Activated CD4-positive, alpha-beta T cell treated with anti-CD3 and anti-CD28 coated beads for 36 hours (primary cell): ENCODE measurements at regions of chr1 and their contacts with region 1.

Region 1: DNA sequence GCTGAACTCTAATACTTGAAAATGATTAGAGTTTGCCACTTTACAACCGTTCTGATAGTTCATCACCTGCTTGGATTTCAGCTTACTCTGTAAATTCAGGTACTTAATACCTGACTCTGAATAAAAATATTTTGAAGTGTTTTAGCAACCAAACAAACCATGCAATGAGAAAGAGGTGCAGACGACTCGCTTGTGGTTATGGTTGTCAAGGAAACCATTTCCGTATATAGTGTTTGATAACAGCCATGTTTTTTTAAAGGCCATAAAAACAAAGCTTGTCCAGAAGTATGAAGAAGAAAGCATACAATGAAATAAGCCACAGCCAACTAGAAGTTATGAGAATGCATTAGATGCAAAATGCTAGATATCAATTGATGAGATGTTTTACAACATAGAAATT is 167.2 kb upstream of the HMCN1 start:
- DNase-seq: peak; percentile 41
- ATAC-seq: peak; percentile 57
- H3K4me3 Mint-ChIP-seq: peak overlapping the region; percentile 22
- H3K27ac Mint-ChIP-seq: peak overlapping the region; percentile 79
- H3K4me1 Mint-ChIP-seq: peaks cover 70% of the 10 kb centered on the region
- H3K27me3 Mint-ChIP-seq: no peaks in the 10 kb centered on the region

Region 2: DNA sequence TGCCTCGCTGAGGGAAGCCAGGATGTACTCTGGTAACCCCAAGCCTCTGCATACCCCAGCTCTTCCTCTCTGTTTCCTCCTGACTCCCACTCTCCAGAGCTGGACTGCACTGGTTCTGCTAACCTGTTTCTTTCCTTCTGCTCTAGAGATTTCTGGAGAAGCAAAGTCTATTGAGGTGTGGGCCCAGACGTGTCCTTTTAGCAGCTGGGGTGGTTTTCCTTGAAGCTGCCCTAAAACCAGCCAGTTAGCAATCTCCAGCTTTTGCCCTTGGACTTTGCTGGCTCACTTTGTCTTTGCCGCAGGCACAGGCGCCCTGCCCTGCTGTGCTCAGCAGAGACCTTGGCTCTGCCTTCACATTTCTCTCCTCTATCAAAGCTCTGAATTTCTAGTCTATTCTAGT is 78.2 kb before region 1 on chr1:
- CTCF ChIA-PET with region 1: no interaction called
- POLR2A ChIA-PET with region 1: no interaction called
- intact Hi-C with region 1: no loop called
- DNase-seq: no peak
- ATAC-seq: no peak
- H3K4me3 Mint-ChIP-seq: no peak overlapping the region
- H3K27ac Mint-ChIP-seq: no peak overlapping the region
- H3K4me1 Mint-ChIP-seq: no peaks in the 10 kb centered on the region
- H3K27me3 Mint-ChIP-seq: no peaks in the 10 kb centered on the region

Region 3: DNA sequence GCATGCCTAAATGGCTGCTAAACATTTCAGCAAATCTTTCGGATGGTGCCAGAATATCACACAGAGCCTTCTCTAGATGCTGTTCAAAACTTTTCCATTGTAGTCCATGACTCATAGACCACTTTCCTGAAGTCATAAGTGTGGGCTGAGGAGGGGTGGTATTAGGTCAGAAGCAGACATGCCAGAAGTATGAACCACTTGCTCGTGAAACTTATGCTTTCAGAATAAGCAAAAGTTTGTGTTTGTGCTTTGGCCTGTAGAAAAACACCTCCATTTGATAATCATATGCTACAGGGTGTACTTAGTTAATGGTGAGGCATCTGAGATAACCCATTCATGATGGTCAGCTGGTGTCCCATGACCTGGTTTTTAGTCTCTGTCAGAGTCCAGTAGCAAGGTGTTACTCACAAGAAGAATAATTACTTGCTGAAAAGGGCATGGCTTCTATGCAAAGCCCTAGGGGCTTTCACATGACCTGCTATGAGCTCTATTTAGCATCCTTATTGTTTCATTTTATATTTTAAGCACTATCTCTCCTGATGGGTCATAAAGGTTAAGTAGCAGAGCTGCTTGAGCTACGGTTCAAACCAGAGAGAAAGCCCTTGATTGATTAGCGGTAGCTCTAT is 66.9 kb before region 1 on chr1:
- CTCF ChIA-PET with region 1: no interaction called
- POLR2A ChIA-PET with region 1: no interaction called
- intact Hi-C with region 1: loop called in 1 of 2 experiments (anchors 5 kb)
- DNase-seq: peak; percentile 21
- ATAC-seq: peak; percentile 92
- H3K4me3 Mint-ChIP-seq: no peak overlapping the region
- H3K27ac Mint-ChIP-seq: no peak overlapping the region
- H3K4me1 Mint-ChIP-seq: peaks cover 13% of the 10 kb centered on the region
- H3K27me3 Mint-ChIP-seq: peaks cover 1% of the 10 kb centered on the region

Region 4: DNA sequence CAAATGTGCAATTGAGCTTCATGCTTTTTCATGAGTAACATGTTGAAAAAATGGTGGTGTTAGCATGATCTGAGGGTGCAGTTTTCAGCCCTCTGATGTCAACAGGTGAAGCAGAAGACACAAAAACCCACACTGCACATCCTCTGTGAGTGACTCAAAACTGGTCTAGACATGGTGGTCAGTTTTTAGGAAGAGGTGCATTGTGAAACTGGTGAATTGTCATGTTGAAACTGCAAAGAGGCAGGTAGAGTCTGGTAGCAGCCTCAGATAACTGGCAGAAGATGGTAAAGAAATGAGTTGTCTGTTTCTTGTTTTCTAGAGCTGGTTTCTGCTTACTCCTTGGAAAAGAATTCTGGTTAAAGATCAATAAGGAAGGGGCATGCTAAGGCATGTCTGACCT is 69.9 kb after region 1 on chr1:
- CTCF ChIA-PET with region 1: interaction called, 3 read pairs
- POLR2A ChIA-PET with region 1: no interaction called
- intact Hi-C with region 1: loop called in 1 of 2 experiments (anchors 2 kb)
- DNase-seq: peak; percentile 63
- ATAC-seq: peak; percentile 95
- H3K4me3 Mint-ChIP-seq: no peak overlapping the region
- H3K27ac Mint-ChIP-seq: peak overlapping the region; percentile 69
- H3K4me1 Mint-ChIP-seq: peaks cover 14% of the 10 kb centered on the region
- H3K27me3 Mint-ChIP-seq: no peaks in the 10 kb centered on the region